A673 (cell line): ENCODE measurements at regions of chr12 and their contacts with region 1.

Region 1: DNA sequence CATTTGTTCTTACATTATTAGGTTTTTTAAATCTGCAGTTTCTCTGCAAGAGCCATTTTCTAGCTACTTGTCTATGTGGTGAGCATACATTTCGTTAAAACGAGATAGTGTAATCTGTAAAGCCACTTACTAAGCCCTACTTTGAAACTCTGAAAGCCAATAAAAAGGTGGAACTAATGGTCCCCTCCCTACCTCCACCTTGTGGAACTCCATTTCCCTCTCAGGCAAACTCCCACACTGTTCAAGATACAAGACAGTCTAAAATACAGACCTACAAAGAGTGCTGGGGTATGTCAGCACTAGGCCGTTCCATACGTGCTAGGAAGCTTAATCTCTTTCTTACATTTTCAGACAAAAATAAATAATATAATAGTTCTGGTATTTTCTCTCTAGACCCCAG is 74.1 kb downstream of the DUSP6 start:
- DNase-seq: no peak
- H3K4me3 ChIP-seq: no peak overlapping the region
- H3K27ac ChIP-seq: peak overlapping the region; percentile 84
- H3K4me1 ChIP-seq: peaks cover 58% of the 10 kb centered on the region
- H3K27me3 ChIP-seq: no peaks in the 10 kb centered on the region
- CTCF ChIP-seq: peak; percentile 45

Region 2: GRCh38 chr12:89051065-89051677 is 227.0 kb before region 1 on chr12:
- CTCF ChIA-PET with region 1: no interaction called
- POLR2A ChIA-PET with region 1: no interaction called
- intact Hi-C with region 1: loop called (anchors 1 kb)
- DNase-seq: peak; percentile 86
- H3K4me3 ChIP-seq: no peak overlapping the region
- H3K27ac ChIP-seq: no peak overlapping the region
- H3K4me1 ChIP-seq: peaks cover 66% of the 10 kb centered on the region
- H3K27me3 ChIP-seq: no peaks in the 10 kb centered on the region
- CTCF ChIP-seq: peak; percentile 95

Region 3: GRCh38 chr12:89140602-89141238 is 137.4 kb before region 1 on chr12:
- CTCF ChIA-PET with region 1: interaction called, 3 read pairs
- POLR2A ChIA-PET with region 1: no interaction called
- intact Hi-C with region 1: loop called (anchors 1 kb)
- DNase-seq: no peak
- H3K4me3 ChIP-seq: no peak overlapping the region
- H3K27ac ChIP-seq: no peak overlapping the region
- H3K4me1 ChIP-seq: peaks cover 46% of the 10 kb centered on the region
- H3K27me3 ChIP-seq: no peaks in the 10 kb centered on the region
- CTCF ChIP-seq: no peak

Region 4: GRCh38 chr12:89262855-89263552 is 15.2 kb before region 1 on chr12:
- CTCF ChIA-PET with region 1: no interaction called
- POLR2A ChIA-PET with region 1: no interaction called
- intact Hi-C with region 1: no loop called
- DNase-seq: no peak
- H3K4me3 ChIP-seq: no peak overlapping the region
- H3K27ac ChIP-seq: no peak overlapping the region
- H3K4me1 ChIP-seq: peaks cover 25% of the 10 kb centered on the region
- H3K27me3 ChIP-seq: no peaks in the 10 kb centered on the region
- CTCF ChIP-seq: no peak

Region 5: DNA sequence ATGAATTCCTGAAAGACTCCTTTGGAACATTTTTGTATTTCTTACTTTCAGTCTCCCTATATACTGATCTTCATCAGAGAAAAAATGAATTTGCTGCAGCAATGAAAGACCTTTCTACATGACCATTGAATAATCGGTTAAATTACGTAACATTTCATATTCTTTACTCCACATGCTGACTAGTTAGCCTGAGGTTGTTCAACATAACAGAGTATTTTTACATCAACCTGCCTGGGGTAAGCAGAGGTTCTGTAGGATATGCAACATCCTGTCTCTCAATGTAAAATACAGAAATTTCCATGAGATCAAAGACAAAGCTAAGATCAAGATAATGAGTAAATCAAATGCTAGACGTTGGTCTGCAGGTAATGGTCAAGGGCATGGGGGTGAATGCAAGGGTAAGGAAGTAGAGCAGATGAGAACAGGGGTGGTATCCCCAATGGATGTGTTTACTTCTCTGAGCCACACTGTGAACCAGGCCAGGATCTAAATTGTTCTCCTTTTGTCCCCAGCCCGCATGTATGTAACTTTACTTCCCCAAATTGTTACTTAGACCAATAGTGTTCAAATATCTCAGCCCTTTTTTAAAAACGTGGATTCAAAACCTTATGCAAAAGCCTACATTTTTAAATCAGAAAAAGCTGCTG is 28.8 kb after region 1 on chr12:
- CTCF ChIA-PET with region 1: no interaction called
- POLR2A ChIA-PET with region 1: interaction called, 10 read pairs
- intact Hi-C with region 1: loop called (anchors 2 kb)
- DNase-seq: no peak
- H3K4me3 ChIP-seq: no peak overlapping the region
- H3K27ac ChIP-seq: peak overlapping the region; percentile 87
- H3K4me1 ChIP-seq: peaks cover 59% of the 10 kb centered on the region
- H3K27me3 ChIP-seq: no peaks in the 10 kb centered on the region
- CTCF ChIP-seq: no peak

Region 6: DNA sequence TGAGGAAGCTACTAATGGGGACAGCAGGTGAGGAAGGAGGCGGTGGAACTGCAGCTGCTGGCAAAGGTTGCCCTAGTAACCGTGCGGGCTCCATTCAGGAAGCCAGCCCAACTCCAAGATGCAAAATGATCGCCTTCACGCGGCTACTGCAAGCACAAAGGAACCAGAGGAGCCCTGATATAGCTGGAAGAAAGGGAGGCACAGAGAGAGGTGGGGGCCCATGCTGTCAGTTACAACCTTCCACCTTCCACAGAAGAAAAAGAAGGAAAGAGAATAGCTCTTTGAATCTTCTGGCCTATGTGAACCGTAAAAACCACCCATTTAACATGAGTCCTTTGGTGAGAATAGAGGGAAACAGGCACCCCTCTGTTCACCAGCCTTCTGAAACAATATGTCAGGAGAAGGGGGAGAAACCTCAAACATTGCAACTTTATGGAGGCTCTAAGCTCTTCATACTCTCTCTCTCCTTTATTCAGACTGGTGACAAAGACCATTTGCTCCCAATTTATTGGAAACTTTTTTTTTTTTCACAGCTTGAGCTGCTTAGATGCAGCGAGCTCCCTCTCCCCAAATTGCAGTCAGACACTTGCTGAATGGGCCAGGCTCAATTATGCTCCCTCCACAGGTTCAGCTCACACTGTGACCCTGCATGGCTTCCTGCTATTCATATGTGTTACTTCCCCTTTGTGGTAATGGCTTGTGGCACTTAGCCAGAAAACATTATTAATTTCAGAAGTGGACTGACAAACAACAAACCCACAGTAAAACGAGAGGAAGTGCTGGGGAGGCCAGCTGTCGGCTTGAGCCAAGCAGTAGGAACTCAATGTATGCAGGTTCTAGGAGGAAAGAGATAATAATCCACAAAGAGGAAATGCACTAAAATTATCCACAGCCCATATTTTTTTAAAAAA is 67.9 kb after region 1 on chr12:
- CTCF ChIA-PET with region 1: no interaction called
- POLR2A ChIA-PET with region 1: no interaction called
- intact Hi-C with region 1: loop called (anchors 1 kb)
- DNase-seq: peak; percentile 99
- H3K4me3 ChIP-seq: peak overlapping the region; percentile 11
- H3K27ac ChIP-seq: peak overlapping the region; percentile 97
- H3K4me1 ChIP-seq: peaks cover 47% of the 10 kb centered on the region
- H3K27me3 ChIP-seq: no peaks in the 10 kb centered on the region
- CTCF ChIP-seq: no peak

Region 7: GRCh38 chr12:89451841-89452251 is 173.7 kb after region 1 on chr12:
- CTCF ChIA-PET with region 1: no interaction called
- POLR2A ChIA-PET with region 1: no interaction called
- intact Hi-C with region 1: loop called (anchors 10 kb)
- DNase-seq: peak; percentile 96
- H3K4me3 ChIP-seq: peak overlapping the region; percentile 11
- H3K27ac ChIP-seq: peak overlapping the region; percentile 97
- H3K4me1 ChIP-seq: peaks cover 80% of the 10 kb centered on the region
- H3K27me3 ChIP-seq: no peaks in the 10 kb centered on the region
- CTCF ChIP-seq: no peak

Region 8: GRCh38 chr12:89524541-89525285 is 246.5 kb after region 1 on chr12 and contains the start of gene GALNT4:
- CTCF ChIA-PET with region 1: no interaction called
- POLR2A ChIA-PET with region 1: no interaction called
- intact Hi-C with region 1: loop called (anchors 10 kb)
- DNase-seq: peak; percentile 94
- H3K4me3 ChIP-seq: peak within 1 kb of the TSS; percentile 82
- H3K27ac ChIP-seq: peak within 1 kb of the TSS; percentile 86
- H3K4me1 ChIP-seq: peaks cover 35% of the 10 kb centered on the region
- H3K27me3 ChIP-seq: no peaks in the 10 kb centered on the region
- CTCF ChIP-seq: peak; percentile 83
- total RNA-seq, gene GALNT4: 13.2 and 14.3 TPM in 2 replicates